Panc1 (cell line): ENCODE measurements at regions of chr2 and their contacts with region 1.

Region 1: GRCh38 chr2:234135720-234136221 is 85.3 kb downstream of the SPP2 start:
- DNase-seq: peak; percentile 50
- ATAC-seq: peak; percentile 92
- H3K4me3 ChIP-seq: no peak overlapping the region
- H3K27ac ChIP-seq: peak overlapping the region; percentile 99
- H3K4me1 ChIP-seq: peaks cover 16% of the 10 kb centered on the region
- H3K27me3 ChIP-seq: no peaks in the 10 kb centered on the region
- CTCF ChIP-seq: peak; percentile 89

Region 2: DNA sequence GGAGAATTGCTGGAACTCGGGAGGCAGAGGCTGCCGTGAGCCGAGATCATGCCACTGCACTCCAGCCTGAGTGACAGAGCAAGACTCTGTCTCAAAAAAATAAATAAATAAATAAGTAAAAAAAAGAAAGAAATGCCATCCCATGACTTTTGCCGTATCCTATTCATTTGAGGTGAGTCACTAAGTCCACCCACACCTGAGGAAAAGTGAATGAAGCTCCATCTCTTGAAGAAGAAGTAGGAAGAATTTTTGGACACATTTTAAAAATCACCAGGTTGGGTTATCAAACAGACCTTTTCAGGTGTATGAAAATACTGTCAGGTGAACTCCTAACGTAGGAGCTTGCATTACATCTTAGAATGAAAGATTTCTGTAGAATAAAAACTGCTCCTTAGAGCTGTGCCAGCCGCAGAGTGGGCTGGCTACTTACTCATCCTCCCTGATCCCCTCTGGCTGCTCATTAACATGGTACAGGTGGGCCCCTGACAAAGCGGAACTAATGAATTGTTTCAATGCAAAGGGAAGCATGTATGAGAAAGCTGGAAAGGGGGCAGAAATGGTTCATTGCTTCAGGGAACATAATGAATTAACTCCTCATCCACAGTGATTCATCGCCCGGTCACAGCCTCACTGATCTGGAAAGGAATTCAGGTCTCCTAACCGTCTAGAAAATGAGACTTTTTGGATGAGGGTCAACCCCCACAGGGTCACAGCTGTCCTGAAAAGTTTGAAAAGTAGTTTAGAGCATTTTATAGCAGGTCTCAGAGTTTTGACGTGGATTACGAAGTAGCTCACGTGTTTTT is 106.1 kb after region 1 on chr2:
- CTCF ChIA-PET with region 1: no interaction called
- POLR2A ChIA-PET with region 1: no interaction called
- in situ Hi-C with region 1: no loop called
- intact Hi-C with region 1: loop called (anchors 5 kb)
- DNase-seq: no peak
- ATAC-seq: peak; percentile 91
- H3K4me3 ChIP-seq: no peak overlapping the region
- H3K27ac ChIP-seq: peak overlapping the region; percentile 99
- H3K4me1 ChIP-seq: peaks cover 42% of the 10 kb centered on the region
- H3K27me3 ChIP-seq: no peaks in the 10 kb centered on the region
- CTCF ChIP-seq: no peak

Region 3: DNA sequence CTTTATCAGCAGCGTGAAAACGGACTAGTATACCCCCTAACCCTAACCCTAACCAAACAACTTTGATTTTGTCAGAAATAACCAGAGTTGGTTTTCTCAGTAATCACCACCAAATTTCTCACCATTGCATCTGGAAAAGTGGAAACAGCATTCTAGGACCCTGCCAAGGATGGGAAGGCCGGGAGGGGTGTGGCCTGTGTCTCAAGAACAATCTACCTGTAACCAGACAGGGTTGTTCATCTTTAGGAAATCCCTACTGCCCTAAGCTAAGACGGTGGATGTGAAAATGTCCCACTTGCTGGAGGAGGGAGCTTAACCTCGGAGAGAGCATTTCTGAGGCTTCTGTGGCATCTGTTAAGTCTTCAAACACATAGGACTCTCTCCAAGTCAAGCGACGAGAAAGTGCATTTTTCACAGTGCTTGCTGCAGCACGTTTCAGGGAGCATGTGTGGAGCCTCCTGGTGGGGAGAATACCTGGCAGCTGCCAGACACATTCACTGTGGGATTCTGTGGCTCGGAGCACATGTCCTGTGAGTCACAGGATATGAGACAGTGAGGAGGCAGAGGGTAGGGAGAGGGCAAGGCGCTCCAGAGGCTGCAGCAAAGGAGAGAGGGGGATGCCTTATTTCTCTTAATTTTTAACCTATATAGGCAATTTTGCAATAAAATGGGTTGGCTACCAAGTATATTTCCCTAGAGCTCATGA is 122.2 kb after region 1 on chr2:
- CTCF ChIA-PET with region 1: no interaction called
- POLR2A ChIA-PET with region 1: no interaction called
- in situ Hi-C with region 1: no loop called
- intact Hi-C with region 1: loop called (anchors 5 kb)
- DNase-seq: peak; percentile 94
- ATAC-seq: peak; percentile 98
- H3K4me3 ChIP-seq: no peak overlapping the region
- H3K27ac ChIP-seq: peak overlapping the region; percentile 99
- H3K4me1 ChIP-seq: peaks cover 45% of the 10 kb centered on the region
- H3K27me3 ChIP-seq: no peaks in the 10 kb centered on the region
- CTCF ChIP-seq: peak; percentile 82

Region 4: GRCh38 chr2:234272069-234272850 is 136.5 kb after region 1 on chr2:
- CTCF ChIA-PET with region 1: no interaction called
- POLR2A ChIA-PET with region 1: interaction called, 11 read pairs
- in situ Hi-C with region 1: no loop called
- intact Hi-C with region 1: no loop called
- DNase-seq: no peak
- ATAC-seq: no peak
- H3K4me3 ChIP-seq: no peak overlapping the region
- H3K27ac ChIP-seq: peak overlapping the region; percentile 60; the same call in 1 of the 2 replicates
- H3K4me1 ChIP-seq: peaks cover 9% of the 10 kb centered on the region; the same call in 1 of the 2 replicates
- H3K27me3 ChIP-seq: no peaks in the 10 kb centered on the region
- CTCF ChIP-seq: no peak

Region 5: DNA sequence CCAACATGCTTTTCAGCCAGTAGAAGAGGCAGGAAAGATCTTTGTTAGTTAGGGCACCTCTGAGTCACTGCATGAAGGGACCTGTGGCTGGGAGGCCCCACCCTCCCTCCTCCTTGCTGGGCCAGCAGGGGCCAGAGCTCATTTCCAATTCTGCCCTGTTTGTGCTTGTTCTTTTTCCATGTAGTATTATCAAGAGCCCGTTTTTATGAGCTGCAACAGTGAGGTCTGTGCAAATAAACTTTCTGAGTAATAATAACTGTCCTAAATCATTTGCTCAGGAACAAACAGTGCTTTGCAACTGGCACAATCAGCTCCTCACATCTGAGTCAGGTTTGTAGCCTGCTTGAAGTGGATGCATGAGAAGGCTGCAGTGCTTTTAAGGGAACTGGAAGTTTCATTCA is 233.1 kb after region 1 on chr2:
- CTCF ChIA-PET with region 1: no interaction called
- POLR2A ChIA-PET with region 1: no interaction called
- in situ Hi-C with region 1: no loop called
- intact Hi-C with region 1: loop called (anchors 5 kb)
- DNase-seq: peak; percentile 77
- ATAC-seq: peak; percentile 97
- H3K4me3 ChIP-seq: no peak overlapping the region
- H3K27ac ChIP-seq: peak overlapping the region; percentile 100
- H3K4me1 ChIP-seq: peaks cover 87% of the 10 kb centered on the region
- H3K27me3 ChIP-seq: no peaks in the 10 kb centered on the region
- CTCF ChIP-seq: no peak

Region 6: DNA sequence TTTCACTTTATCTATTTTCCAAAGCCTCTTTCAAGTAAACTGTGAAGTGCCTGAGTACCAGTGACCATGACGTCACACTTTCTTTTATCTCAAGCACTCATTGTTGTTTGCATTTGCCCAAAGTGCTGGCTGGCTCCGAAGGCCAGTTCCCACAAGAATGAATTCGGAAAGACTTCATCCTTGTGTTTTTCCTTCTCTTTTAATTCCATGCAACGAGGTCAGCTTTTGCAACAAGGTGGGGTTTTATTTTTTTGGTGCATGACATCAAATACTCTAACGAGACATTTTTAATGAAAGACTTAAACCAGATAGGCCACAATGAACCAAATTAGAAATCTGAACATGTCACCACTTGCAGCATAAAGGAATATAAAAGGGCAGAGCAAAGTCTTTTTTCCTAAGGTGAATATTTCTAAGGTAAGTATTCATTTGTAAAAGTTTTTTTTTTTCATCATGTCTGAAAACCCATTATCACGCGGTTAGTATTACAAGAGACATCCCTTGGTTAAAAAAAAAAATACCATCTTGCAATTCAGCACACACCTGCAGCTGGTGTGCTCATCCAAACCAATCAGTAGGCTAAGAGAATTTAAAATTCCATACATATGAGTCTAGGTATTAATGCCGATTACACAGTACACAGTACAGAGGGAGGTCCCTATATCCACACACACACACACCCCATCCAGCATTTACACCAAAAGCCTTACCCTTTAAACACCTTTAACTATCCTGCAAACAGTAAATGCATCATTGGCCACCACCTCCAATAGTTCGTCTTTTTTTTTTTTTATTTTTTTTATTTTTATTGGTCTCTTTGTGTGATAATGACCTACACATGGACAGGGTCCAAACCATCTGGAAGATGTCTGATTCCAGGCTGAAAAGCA is 358.8 kb after region 1 on chr2:
- CTCF ChIA-PET with region 1: interaction called, 3 read pairs
- POLR2A ChIA-PET with region 1: interaction called, 6 read pairs
- in situ Hi-C with region 1: no loop called
- intact Hi-C with region 1: loop called (anchors 5 kb)
- DNase-seq: no peak
- ATAC-seq: no peak
- H3K4me3 ChIP-seq: peak overlapping the region; percentile 72 to 97
- H3K27ac ChIP-seq: peak overlapping the region; percentile 91
- H3K4me1 ChIP-seq: peaks cover 38% of the 10 kb centered on the region
- H3K27me3 ChIP-seq: no peaks in the 10 kb centered on the region
- CTCF ChIP-seq: no peak